ENCODE measurements at regions of chr15 and their contacts with region 1.

Region 1: GRCh38 chr15:73078722-73079121 is 26.5 kb downstream of the NEO1 start:
- DNase-seq: no peak
- H3K4me3 ChIP-seq: no peak overlapping the region
- CTCF ChIP-seq: no peak
- POLR2A ChIP-seq: no peak

Region 2: DNA sequence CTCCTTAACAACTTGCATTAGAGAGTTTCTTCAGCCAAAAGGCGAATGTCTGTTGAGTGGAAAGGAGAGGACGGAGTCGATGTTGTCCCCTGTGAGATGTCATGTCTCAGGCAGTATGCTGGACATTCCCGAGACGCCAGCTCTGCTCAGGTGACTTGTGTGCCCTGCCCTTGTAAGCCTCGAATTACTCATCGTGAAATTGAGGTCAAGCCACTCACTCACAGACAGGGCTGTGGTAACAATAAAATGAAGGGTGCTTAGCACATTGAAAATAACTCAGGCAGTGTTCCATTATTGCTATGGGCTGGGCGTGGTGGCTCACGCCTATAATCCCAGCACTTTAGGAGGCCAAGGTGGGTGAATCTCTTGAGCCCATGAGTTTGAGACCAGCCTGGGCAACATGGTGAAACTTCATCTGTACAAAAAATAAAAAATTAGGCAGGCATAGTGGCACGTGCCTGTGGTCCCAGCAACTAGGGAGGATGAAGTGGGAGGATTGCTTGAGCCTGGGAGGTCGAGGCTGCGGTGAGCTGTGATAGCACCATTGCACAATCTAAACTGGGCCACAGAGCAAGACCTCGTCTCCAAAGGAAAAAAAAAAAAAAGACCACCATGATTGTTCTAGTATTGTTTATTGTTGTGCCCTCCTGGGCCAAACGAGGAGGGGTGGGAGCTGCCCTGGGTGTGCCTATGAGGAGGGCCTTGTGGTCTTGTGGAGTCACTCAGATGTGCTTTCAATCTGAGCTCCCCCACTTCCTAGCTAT is 1749.0 kb before region 1 on chr15:
- intact Hi-C with region 1: no loop called
- DNase-seq: peak in 1 of 2 donors; percentile 33
- H3K4me3 ChIP-seq: no peak overlapping the region
- CTCF ChIP-seq: no peak
- POLR2A ChIP-seq: no peak

Region 3: DNA sequence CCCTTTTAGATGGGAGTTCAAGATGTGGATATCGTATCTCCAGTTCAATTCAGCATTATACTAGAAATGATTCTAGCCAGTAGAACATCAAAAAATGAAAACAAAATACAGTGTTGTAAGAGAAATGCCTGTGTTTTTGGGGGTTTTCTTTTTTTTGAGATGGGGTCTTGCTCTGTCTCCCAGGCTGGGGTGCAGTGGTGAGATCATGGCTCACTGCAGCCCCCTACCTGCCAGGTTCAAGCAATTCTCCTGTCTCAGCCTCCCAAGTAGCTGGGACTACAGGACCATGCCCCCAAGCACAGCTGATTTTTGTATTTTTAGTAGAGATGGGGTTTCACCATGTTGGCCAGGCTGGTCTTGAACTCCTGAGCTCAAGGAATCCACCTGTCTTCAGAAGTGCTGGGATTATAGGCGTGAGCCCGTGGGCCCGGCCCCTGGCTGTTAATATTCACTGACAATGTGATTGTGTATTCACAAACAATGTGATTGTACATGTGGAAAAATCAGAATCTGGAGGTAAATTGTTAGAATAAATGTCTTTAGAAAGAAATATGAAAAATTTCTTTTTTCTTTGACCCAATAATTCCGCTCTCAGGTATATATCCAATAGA is 545.6 kb before region 1 on chr15:
- intact Hi-C with region 1: no loop called
- DNase-seq: no peak
- H3K4me3 ChIP-seq: no peak overlapping the region
- CTCF ChIP-seq: no peak
- POLR2A ChIP-seq: no peak

Region 4: DNA sequence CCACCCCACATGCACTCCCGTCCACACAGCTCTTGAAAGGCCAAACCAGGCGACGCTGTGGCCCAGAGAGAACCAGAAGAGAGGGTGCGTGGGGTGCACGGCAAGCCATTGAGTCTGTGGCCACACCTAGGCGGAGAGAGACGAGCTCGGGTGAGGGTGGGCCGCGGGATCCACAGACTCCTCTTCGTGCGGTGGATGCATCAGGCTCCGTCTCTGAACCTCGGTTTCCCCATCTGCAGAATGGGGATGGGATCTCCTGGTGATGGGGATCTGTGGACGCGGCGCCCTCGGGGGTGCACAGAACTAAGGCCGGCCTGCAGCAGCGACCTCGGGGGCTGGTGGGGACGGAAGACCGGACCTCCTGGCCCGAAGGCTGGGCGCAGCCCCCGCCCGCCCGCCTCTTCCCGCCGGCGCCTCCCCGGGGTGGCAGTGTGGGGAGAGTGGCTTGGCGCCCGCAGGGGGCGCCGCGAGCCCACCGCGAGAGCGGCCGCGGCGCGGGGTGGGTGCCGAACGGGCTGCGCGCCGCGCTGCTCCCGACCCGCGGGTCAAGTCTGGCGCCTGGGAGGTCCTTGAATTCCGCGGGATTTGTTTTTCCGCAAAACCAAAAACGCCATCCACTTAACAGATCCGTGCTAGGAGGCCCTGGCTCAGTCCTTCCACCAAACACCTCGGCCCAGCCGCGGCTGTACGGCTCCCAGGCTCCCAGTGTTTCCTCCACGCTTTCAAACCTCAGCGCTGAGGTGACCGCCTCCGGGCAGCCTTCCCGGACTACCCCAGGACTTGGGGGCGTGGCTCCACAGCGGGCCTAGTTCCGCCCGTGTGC is 282.0 kb before region 1 on chr15:
- intact Hi-C with region 1: loop called (anchors 10 kb)
- DNase-seq: peak in 1 of 2 donors; percentile 81
- H3K4me3 ChIP-seq: peak overlapping the region; percentile 32
- CTCF ChIP-seq: no peak
- POLR2A ChIP-seq: no peak

Measured in lower leg skin (tissue), 4 donors.